ENCODE measurements at regions of chr1 and their contacts with region 1.

Region 1: DNA sequence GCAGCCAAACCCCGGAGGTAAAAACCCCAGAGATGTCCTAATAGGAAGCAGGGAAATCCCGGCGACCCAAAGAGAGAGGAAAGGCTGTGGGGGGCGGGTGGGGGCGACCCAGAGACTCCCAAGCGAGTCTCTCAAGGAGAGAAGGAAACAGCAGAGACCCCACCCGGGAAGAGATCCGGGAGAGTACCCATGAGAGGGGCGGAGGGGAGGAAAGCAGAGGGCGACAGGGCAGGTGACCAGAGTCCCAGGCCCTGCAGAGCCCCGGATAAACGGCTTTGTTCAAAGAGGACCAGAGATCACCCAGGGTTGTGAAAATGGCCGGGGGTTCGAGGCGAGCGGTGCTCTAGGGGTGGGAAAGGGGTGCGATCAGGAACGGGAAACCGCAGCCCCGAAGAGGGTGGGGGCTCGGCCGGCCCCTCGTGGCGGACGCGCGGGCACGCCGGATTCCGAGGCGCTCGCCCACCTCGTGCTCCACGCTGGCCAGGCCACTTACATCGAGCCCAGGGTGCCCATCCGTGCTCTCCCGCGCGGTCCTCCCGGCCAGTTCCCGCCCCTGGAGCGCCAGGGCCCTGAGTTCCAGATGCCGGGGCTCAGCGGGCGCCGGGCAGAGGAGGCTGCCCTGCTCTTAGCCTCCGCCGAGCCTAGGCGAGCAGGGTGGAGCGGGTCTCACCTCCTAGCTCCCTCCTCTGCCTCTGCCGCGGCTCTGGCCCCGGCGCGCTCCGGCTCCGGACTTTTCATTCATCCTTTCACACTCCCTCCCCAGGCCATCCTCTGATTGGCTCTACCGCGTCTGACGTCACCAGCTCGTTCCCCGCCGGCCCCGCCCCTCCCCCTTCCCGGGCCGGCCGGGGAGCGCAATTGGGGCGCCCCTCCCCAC is 52.3 kb downstream of the RHBG start:
- DNase-seq: peak; percentile 86
- H3K4me3 Mint-ChIP-seq: peak overlapping the region; percentile 73
- H3K27ac Mint-ChIP-seq: no peak overlapping the region
- H3K4me1 Mint-ChIP-seq: peaks cover 21% of the 10 kb centered on the region
- H3K27me3 Mint-ChIP-seq: peaks cover 49% of the 10 kb centered on the region

Region 2: DNA sequence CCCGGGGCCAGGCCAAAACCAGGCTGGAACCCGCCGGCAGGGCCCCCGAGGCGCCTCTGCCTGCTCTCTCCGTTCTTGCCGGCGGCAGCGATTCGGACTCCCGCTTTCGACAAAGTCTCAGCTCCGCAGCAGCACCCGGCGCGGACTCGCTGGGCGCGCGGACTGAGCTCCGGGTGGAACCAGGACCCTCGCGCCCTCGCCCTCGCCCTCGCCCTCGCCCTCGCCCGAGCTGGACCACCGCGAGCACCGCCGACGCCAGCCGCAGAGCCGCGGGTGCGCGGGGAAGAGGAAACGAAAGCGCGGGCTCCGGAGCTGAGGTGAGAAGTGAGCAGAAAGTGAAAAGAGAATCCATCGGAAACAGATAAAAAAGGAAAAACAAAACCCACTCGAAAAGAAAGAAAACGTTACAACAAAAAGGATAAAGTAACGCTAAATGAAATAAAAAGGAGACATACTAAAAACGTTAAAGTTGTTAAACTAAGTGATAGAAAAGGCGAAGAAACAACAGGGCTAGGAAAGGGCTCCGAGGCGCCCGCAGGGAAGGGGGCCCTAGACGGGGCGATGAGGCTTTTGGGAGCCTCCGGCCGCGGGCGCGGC is 14.3 kb after region 1 on chr1:
- CTCF ChIA-PET with region 1: interaction called, 4 read pairs
- POLR2A ChIA-PET with region 1: interaction called, 3 read pairs
- intact Hi-C with region 1: loop called (anchors 2 kb)
- DNase-seq: peak; percentile 32
- H3K4me3 Mint-ChIP-seq: peak overlapping the region; percentile 46
- H3K27ac Mint-ChIP-seq: no peak overlapping the region
- H3K4me1 Mint-ChIP-seq: peaks cover 38% of the 10 kb centered on the region
- H3K27me3 Mint-ChIP-seq: peaks cover 79% of the 10 kb centered on the region

Measured in activated CD4-positive, alpha-beta memory T cell treated with anti-CD3 and anti-CD28 coated beads for 36 hours (primary cell).